HAP-1 (cell line): ENCODE measurements at regions of chr17 and their contacts with region 1.

Region 1: DNA sequence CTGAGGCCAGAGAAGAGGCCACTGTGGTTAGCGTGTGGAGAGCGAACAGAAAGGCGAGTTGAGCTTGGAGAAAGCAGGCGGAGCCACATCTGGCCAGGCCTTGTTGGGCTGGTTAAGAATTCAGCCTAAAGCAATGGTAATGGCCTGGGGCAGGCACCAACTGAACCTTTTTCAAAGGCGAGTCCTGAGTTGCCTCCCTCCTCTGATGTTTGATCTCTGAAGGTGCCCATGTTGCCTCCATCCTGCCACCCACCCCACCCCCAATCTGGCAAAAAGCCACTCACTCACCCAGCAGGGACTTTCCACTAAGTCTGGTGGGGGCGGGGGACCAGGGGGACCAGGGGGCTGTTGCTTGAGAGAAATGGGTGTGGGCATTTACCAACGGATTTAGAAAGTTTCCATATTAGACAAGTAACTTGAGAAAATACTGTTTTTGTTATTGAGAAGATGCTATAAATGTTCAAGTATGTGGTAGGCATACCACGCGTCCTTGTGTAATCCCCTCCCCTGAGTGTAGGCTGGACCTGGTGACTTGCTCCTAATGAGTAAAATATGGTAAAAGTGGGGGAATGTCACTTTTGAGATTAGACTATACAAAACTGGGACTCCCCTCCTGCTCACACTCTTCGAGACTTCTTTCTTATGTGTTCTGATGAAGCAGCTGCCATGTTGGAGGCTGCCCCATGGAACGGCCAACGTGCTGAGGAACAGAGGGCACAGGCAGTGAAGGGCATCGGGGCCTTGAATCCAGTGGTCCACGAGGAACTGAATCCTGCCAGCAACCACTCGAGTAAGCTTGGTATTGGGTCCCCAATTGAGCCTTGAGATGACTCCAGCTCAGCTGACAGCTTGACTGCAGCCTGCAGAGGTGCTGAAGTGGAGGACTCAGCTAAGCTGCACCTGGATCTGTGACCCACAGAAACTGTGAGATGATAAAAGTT is 29.9 kb upstream of the TNS4 start:
- DNase-seq: no peak
- H3K4me3 ChIP-seq: no peak overlapping the region
- H3K4me1 ChIP-seq: no peaks in the 10 kb centered on the region
- H3K27me3 ChIP-seq: no peaks in the 10 kb centered on the region

Region 2: DNA sequence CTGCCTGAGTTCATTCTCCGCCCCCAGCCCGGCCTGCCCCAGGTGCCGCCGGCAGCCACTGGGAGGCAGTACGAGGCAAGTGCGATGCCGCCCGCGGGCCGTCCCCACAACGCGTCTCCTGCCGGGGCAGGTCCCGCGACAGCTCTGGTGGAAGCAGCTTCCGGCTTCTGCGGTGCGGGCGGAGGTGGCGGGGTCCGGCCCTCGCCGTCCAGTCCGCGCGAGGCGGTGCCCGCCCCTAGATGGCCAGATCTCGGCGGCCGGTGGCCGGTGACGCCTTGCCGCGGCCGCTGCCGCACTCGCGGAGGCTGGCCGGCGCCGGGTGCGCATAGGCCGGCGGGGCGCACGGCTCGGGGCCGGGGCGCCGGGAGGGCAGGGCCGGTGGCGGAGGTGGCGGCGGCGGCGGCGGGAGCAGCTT is 168.6 kb before region 1 on chr17:
- in situ Hi-C with region 1: loop called (anchors 5 kb)
- DNase-seq: peak; percentile 69 to 88
- H3K4me3 ChIP-seq: peak overlapping the region; percentile 33
- H3K4me1 ChIP-seq: peaks cover 2% of the 10 kb centered on the region; the same call in 1 of the 2 replicates
- H3K27me3 ChIP-seq: no peaks in the 10 kb centered on the region